Right lobe of liver (tissue), 6 donors: ENCODE measurements at regions of chr20 and their contacts with region 1.

Region 1: DNA sequence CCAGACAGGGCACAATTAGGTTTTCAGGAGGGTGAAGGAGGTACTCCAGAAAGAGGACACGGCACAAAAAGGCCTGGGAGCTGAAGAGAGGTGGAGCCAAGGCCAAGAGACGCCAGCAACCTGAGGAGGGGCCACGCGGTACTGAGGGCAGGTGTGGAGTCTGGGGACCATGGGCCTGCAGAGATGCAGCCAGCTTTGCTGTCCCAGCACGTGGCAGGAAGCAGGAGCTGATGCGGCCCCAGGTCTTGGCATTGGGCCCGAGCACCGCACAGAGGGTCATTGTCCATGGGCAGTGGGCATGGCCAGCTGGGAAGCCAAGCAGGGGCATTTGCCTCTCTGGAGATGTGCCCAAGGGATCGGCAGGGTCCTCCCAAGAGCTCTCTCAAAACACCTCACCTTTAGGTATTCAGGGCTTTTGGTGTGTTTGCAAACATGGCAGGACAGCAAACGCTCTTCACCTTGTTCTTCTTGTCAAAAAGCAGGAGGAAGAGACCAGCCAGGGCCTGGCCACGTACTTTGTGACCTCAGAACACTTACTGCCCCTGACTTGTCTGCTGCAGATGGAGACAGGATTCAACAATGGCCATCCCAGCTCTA is 1.4 kb upstream of the BPIFB1 start:
- DNase-seq: no peak
- ATAC-seq: no peak
- H3K4me3 ChIP-seq: no peak overlapping the region
- H3K27ac ChIP-seq: no peak overlapping the region
- H3K4me1 ChIP-seq: no peaks in the 10 kb centered on the region
- H3K27me3 ChIP-seq: no peaks in the 10 kb centered on the region
- CTCF ChIP-seq: no peak
- POLR2A ChIP-seq: no peak

Region 2: DNA sequence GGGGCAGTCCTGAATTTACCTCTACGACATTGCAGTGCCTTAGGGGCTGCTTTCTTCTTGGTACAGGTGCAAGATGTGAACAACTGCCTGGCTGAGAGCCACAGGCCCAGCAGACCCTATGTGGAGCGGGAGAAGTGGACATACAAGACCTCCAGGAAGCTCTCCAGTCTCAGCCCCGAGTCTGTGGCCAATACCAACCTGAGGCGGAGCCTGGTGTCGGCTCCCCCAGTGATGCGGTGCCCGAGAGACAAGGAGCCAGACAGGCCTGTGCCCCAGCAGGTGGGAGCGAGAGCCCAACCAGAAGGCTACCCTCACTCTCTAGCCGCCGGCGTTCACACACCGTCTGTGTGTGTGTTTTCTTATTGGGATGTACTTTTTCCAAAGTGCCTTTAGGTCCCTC is 363.4 kb before region 1 on chr20:
- intact Hi-C with region 1: loop called in 1 of 2 experiments (anchors 10 kb)
- DNase-seq: no peak
- ATAC-seq: no peak
- H3K4me3 ChIP-seq: no peak overlapping the region
- H3K27ac ChIP-seq: no peak overlapping the region
- H3K4me1 ChIP-seq: no peaks in the 10 kb centered on the region
- H3K27me3 ChIP-seq: no peaks in the 10 kb centered on the region
- CTCF ChIP-seq: no peak
- POLR2A ChIP-seq: no peak

Region 3: DNA sequence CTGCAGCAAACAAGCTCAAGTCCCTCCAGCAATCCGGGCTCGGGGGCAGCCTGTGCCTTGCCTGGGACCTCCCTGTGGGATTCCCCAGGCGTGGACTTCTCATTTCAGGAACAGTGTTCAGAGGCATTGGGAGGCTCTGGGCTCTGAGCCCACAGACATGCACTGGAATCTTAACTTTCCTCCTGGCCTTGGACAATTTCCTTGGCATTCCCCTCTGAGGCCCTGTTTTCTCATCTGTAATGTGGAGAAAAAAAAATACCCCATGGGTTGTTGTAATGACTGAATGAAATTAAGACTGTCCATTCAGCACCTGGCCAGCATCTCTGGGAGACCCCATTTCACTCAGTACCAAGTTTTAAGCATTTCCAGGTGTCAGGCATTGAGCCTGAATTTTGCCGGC is 184.6 kb before region 1 on chr20:
- intact Hi-C with region 1: loop called in 1 of 2 experiments (anchors 10 kb)
- DNase-seq: no peak
- ATAC-seq: no peak
- H3K4me3 ChIP-seq: no peak overlapping the region
- H3K27ac ChIP-seq: no peak overlapping the region
- H3K4me1 ChIP-seq: no peaks in the 10 kb centered on the region
- H3K27me3 ChIP-seq: no peaks in the 10 kb centered on the region
- CTCF ChIP-seq: no peak
- POLR2A ChIP-seq: no peak